ENCODE measurements at regions of chr11 and their contacts with region 1.

Region 1: GRCh38 chr11:121711963-121712362 is 259.2 kb upstream of the SORL1-AS1 start:
- DNase-seq: no peak
- H3K4me3 ChIP-seq: no peak overlapping the region
- H3K27ac ChIP-seq: no peak overlapping the region
- H3K4me1 ChIP-seq: no peaks in the 10 kb centered on the region
- H3K27me3 ChIP-seq: no peaks in the 10 kb centered on the region
- CTCF ChIP-seq: no peak
- EP300 ChIP-seq: no peak
- POLR2A ChIP-seq: no peak

Region 2: GRCh38 chr11:121520243-121521144 is 191.5 kb before region 1 on chr11:
- intact Hi-C with region 1: no loop called
- DNase-seq: no peak
- H3K4me3 ChIP-seq: no peak overlapping the region
- H3K27ac ChIP-seq: no peak overlapping the region
- H3K4me1 ChIP-seq: no peaks in the 10 kb centered on the region
- H3K27me3 ChIP-seq: no peaks in the 10 kb centered on the region
- CTCF ChIP-seq: no peak
- EP300 ChIP-seq: no peak
- POLR2A ChIP-seq: no peak

Region 3: DNA sequence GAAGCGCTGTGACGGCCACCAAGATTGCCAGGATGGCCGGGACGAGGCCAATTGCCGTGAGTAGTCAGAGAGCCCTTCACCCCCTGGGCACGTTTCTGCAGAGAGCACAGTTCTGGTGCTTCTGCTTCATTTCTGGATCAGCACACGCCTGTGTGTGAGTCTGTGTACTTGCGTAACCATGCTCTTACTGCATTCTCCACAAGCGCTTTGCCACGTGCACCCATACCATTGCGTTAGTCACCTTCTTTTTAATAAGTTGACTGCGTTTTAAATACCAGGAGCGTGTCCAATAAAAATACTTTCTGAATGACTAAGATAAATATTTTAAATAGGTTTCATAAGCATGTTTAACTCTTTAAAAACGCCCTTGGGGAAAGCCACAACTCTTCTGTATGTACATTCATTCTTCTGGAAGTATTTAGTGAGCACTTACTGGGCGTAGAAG is 116.2 kb before region 1 on chr11:
- intact Hi-C with region 1: no loop called
- DNase-seq: no peak
- H3K4me3 ChIP-seq: no peak overlapping the region
- H3K27ac ChIP-seq: no peak overlapping the region
- H3K4me1 ChIP-seq: no peaks in the 10 kb centered on the region
- H3K27me3 ChIP-seq: no peaks in the 10 kb centered on the region
- CTCF ChIP-seq: no peak
- EP300 ChIP-seq: no peak
- POLR2A ChIP-seq: no peak

Region 4: DNA sequence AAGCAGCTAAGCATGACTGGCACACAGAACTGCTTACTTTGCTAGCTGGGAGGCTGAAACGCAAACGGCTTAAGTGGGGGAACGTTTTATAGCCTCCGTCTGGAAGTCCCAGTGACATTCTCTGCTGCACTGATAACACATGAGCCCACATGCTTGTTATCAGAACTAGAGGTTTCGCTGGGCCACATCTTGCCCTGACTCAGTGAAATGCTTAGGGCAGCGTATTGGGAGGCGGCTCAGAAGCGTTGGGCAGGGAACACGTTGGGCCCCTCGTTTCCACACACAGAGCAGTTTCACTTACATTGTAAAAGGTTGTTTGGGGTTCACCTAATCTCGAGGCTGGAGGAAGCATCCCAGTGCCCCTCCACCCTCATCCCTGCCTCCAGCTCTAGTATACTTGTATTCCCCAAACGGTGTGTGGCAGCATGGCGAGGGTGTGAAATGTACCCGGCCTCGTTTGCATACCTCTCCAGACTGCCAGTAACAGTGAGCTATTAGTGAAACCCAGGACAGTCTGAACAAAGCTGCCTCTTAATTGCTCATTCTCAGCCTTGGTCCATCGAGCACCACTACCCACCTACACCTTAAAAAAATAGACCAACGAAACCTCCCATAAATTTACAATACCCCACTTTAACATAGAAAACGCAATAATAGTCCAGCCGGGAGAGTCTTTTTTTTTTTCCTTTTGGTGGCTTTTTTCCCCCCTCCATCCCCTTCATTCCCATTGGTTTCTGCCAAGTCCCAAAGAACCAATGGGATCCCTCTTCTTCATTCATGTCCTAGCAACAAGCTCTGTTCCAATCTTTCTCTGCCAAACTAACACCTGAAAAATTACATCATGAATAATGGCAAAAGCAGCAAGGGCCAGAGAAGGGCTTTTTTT is 40.4 kb before region 1 on chr11:
- intact Hi-C with region 1: loop called in 1 of 4 experiments (anchors 5 kb)
- DNase-seq: peak in 4 of 5 donors; percentile 41 to 62 (median 45)
- H3K4me3 ChIP-seq: no peak overlapping the region
- H3K27ac ChIP-seq: peak overlapping the region; percentile 19 to 71
- H3K4me1 ChIP-seq: peaks cover 5% of the 10 kb centered on the region
- H3K27me3 ChIP-seq: no peaks in the 10 kb centered on the region
- CTCF ChIP-seq: no peak
- EP300 ChIP-seq: no peak
- POLR2A ChIP-seq: no peak

Measured in ovary (tissue), 10 donors.